Posterior vena cava (tissue), 2 donors: ENCODE measurements at regions of chr17 and their contacts with region 1.

Region 1: DNA sequence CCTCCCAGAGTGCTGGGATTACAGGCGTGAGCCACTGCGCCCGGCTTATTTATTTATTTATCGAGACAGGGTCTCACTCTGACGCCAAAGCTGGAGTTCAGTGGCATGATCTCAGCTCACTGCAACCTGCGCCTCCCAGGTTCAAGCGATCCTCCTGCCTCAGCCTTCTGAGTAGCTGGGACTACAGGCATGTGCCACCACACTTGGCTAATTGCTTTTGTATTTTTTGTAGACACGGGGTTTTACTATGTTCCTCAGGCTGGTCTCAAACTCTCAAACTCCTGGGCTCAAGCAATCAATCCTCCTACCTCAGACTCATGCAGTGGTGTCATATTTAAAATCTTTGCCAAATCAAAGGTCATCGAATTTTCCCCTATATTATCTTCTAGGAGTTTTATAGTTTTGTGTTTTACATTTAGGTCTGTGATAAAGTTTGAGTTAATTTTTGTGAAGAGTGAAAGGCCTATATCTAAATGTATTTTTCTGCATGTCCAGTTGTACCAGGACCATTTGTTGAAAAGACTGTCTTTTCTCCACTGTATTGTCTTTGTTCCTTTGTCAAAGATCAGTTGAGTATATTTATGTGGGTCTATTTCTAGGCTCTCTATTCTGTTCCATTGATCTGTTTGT is 47.1 kb downstream of the NACA2 start:
- DNase-seq: no peak

Region 2: DNA sequence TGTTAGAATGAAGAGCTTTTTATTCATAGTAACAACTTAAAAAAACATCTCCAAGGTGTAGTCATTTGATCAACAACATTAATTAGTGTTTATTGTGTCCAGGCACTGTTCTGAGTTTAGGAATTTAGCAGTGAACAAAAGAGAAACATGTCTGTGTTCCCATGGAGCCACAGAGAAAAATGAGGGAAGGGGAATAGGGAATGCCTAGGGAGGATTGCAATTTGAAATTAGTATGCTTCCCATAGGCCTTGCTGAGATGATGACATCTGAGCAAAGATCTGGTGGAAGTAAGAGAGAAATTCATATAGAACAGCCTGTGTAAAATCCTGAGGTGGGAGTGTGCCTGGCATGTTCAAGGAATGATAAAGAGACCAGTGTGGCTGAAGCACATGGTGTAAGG is 548.2 kb before region 1 on chr17:
- intact Hi-C with region 1: loop called in 1 of 2 experiments (anchors 5 kb)
- DNase-seq: no peak

Region 3: GRCh38 chr17:61335845-61336655 is 207.9 kb before region 1 on chr17:
- intact Hi-C with region 1: no loop called
- DNase-seq: no peak

Region 4: GRCh38 chr17:61451538-61452300 is 92.2 kb before region 1 on chr17:
- intact Hi-C with region 1: loop called in 1 of 2 experiments (anchors 10 kb)
- DNase-seq: no peak